Endothelial cell of umbilical vein (primary cell): ENCODE measurements at regions of chr10 and their contacts with region 1.

Region 1: DNA sequence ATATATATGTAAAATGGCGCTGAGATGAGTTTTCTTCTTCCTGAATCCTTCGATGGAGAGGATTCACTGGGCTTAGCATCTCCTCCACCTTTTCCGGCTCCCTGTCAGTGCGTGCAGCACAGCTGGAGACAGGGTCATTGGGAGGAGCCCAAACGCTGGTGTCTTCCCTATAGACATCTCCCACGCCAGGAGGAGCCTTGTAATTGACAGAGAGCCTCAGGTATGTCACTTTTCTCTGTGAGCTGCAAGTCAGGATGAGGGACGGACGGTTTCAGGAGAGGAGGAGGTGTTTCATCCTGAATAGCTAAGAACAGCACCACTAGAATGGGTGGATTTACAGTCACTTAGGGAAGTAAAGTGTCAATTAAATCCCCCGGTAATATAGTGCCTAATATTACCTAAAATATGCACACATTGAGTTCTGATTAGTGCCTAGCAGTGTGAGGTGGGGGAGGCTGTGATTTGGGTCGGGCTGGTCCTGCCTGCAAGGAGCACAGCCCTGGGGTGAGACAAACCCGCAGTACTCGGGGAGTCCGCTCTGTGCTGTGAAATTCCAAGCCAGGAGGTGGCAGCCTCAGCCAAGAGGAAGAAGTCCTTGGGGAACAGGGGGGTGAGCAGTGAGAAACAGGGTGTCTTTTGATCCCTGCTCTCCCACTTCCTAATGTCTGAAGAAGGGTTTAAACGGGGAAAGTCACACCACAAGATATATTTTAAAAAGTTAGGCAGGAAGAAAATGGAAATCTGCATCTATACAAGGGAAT is 28.2 kb downstream of the IL15RA start:
- DNase-seq: peak; percentile 82
- H3K4me3 ChIP-seq: no peak overlapping the region
- H3K27ac ChIP-seq: no peak overlapping the region
- H3K4me1 ChIP-seq: peaks cover 32% of the 10 kb centered on the region
- H3K27me3 ChIP-seq: no peaks in the 10 kb centered on the region
- CTCF ChIP-seq: peak; percentile 45 to 66
- POLR2A ChIP-seq: no peak

Region 2: GRCh38 chr10:5889624-5890451 is 59.3 kb before region 1 on chr10 and contains the starts of genes ANKRD16 and FBH1:
- CTCF ChIA-PET with region 1: no interaction called
- POLR2A ChIA-PET with region 1: no interaction called
- dilution Hi-C with region 1: no loop called
- intact Hi-C with region 1: loop called (anchors 1 kb)
- DNase-seq: peak; percentile 99
- H3K4me3 ChIP-seq: peak within 1 kb of the TSS; percentile 16 to 95 (median 62)
- H3K27ac ChIP-seq: peak within 1 kb of the TSS; percentile 44
- H3K4me1 ChIP-seq: peaks cover 36% of the 10 kb centered on the region
- H3K27me3 ChIP-seq: no peaks in the 10 kb centered on the region
- CTCF ChIP-seq: no peak
- POLR2A ChIP-seq: peak; percentile 82
- total RNA-seq, gene ANKRD16: 4.4 and 6.9 TPM in 2 replicates
- total RNA-seq, gene FBH1: 86.1 and 97.0 TPM in 2 replicates

Region 3: GRCh38 chr10:5904227-5904626 is 45.0 kb before region 1 on chr10:
- CTCF ChIA-PET with region 1: no interaction called
- POLR2A ChIA-PET with region 1: no interaction called
- dilution Hi-C with region 1: no loop called
- intact Hi-C with region 1: no loop called
- DNase-seq: no peak
- H3K4me3 ChIP-seq: no peak overlapping the region
- H3K27ac ChIP-seq: no peak overlapping the region
- H3K4me1 ChIP-seq: peaks cover 2% of the 10 kb centered on the region
- H3K27me3 ChIP-seq: no peaks in the 10 kb centered on the region
- CTCF ChIP-seq: no peak
- POLR2A ChIP-seq: no peak

Region 4: GRCh38 chr10:5971315-5971832 is 22.2 kb after region 1 on chr10:
- CTCF ChIA-PET with region 1: interaction called, 6 read pairs
- POLR2A ChIA-PET with region 1: no interaction called
- dilution Hi-C with region 1: no loop called
- intact Hi-C with region 1: loop called (anchors 1 kb)
- DNase-seq: peak; percentile 88
- H3K4me3 ChIP-seq: peak overlapping the region in 1 of 3 experiments; percentile 28
- H3K27ac ChIP-seq: peak overlapping the region; percentile 88
- H3K4me1 ChIP-seq: peaks cover 40% of the 10 kb centered on the region
- H3K27me3 ChIP-seq: no peaks in the 10 kb centered on the region
- CTCF ChIP-seq: no peak
- POLR2A ChIP-seq: no peak

Region 5: GRCh38 chr10:5999438-6000165 is 50.4 kb after region 1 on chr10:
- CTCF ChIA-PET with region 1: no interaction called
- POLR2A ChIA-PET with region 1: no interaction called
- dilution Hi-C with region 1: no loop called
- intact Hi-C with region 1: no loop called
- DNase-seq: no peak
- H3K4me3 ChIP-seq: no peak overlapping the region
- H3K27ac ChIP-seq: no peak overlapping the region
- H3K4me1 ChIP-seq: no peaks in the 10 kb centered on the region
- H3K27me3 ChIP-seq: peaks cover 0 to 7% of the 10 kb centered on the region in 2 experiments
- CTCF ChIP-seq: no peak
- POLR2A ChIP-seq: no peak

Region 6: GRCh38 chr10:6014241-6014761 is 65.1 kb after region 1 on chr10:
- CTCF ChIA-PET with region 1: interaction called, 32 read pairs
- POLR2A ChIA-PET with region 1: no interaction called
- dilution Hi-C with region 1: no loop called
- intact Hi-C with region 1: loop called (anchors 1 kb)
- DNase-seq: peak; percentile 53
- H3K4me3 ChIP-seq: no peak overlapping the region
- H3K27ac ChIP-seq: no peak overlapping the region
- H3K4me1 ChIP-seq: no peaks in the 10 kb centered on the region
- H3K27me3 ChIP-seq: peaks cover 0 to 6% of the 10 kb centered on the region in 2 experiments
- CTCF ChIP-seq: peak; percentile 58 to 60
- POLR2A ChIP-seq: no peak

Region 7: DNA sequence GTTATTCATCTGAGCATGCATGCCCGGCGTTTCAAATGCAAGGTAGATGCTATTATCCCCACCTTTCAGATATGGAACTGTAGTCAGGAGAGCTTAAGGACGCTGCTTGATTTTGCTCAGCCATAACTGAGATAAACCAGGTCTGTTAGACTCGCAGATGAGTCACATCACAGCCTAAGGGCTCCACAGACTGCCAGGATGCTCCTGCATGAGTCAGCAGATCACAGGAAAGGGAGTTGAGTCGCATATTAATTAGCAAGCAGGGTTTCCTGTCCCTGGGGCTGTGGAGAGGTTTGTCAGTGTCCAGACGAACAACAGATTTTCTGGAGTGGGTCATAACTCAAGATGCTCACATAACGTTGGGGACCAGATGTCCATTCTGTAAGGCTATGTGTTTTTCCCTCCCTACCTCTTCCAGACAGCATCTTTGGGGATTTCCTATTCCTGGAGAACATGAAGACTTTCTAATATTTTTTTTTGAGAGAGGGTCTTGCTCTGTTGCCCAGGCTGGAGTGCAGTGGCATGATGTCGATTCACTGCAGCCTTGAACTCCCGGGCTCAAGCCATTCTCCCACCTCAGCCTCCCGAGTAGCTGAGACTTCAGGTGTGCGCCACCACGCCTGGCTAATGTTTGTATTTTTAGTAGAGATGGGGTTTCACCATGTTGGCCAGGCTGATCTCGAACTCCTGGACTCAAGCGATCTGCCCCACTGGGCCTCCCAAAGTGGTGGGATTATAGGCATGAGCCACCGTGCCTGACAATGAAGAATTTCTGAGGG is 290.2 kb after region 1 on chr10:
- CTCF ChIA-PET with region 1: no interaction called
- POLR2A ChIA-PET with region 1: interaction called, 3 read pairs
- dilution Hi-C with region 1: no loop called
- intact Hi-C with region 1: loop called (anchors 1 kb)
- DNase-seq: peak; percentile 94
- H3K4me3 ChIP-seq: no peak overlapping the region
- H3K27ac ChIP-seq: peak overlapping the region; percentile 50
- H3K4me1 ChIP-seq: peaks cover 13% of the 10 kb centered on the region
- H3K27me3 ChIP-seq: no peaks in the 10 kb centered on the region
- CTCF ChIP-seq: no peak
- POLR2A ChIP-seq: no peak